Posterior cingulate gyrus (tissue), 11 donors: ENCODE measurements at regions of chr12 and their contacts with region 1.

Region 1: GRCh38 chr12:85448548-85449139 is 168.6 kb downstream of the ALX1 start:
- DNase-seq: no peak

Region 2: DNA sequence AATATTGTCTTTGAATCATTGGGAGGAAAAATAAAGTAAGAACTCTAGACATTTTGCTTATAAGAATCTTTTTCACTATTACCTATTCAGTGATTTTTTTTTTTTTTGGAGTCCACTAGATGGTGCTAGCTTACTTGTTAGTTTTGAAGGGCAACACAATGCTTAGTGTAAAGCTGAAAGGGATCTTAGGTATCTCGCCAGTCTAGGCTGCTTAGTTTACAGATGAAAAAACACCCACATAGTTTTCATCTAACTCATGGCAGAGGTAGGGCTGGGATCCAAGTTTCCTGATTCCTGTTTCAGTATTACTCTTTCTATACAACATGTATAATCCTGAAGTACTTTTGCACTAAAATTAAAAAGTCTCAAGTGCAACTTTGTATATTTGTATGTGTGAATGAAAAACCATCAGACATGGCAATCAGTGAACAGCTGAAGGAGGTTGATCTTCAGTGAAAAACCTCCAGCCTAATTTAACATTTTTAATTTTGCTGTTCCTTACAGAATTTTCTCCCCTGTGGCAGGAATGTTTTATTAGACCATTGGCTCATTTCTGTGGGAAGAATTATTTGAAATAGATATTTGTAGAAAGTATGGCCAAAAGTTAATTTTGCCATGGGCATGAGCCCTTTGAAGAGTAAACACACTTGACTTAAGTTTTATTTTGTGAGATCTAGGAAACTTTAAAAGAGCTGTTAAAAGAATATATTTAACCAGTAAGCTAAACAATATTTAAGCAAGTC is 371.8 kb before region 1 on chr12:
- intact Hi-C with region 1: loop called (anchors 5 kb)
- DNase-seq: no peak

Region 3: DNA sequence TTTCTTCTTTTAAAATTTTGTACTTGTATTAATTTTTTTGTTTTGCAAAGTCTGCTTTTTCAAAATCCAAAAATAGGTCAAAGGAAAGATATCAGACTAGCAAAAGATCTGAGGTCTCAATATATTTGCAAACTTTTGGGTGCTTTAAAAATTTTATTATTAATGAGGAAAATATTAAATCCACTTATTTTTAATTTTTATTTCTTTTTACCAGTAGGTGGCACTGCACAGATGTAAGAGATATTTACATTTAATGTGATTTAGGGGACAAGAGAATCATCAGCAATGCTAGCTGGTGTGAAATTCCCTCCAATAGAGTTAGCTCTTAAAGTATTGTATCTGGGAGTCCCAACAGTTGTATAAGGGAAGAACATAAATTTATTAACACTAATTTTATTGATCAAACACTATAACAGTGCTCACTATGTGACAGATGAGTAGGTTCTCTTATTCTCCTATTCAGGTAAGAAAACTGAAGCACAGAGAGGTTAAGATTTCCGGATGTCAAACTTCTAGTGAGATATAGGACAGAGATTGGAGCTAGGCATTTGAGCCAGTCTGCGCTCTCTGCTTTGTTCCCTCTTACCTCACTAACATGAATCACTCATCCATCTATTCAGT is 138.1 kb before region 1 on chr12:
- intact Hi-C with region 1: loop called (anchors 10 kb)
- DNase-seq: no peak